ENCODE measurements at regions of chr10 and their contacts with region 1.

Region 1: GRCh38 chr10:125160856-125161706 is 718 bp upstream of the CTBP2 start:
- DNase-seq: peak; percentile 80 to 85
- ATAC-seq: peak; percentile 62 to 85 (median 73)
- H3K4me3 ChIP-seq: peak overlapping the region; percentile 46 to 98 (median 88)
- H3K27ac ChIP-seq: peak overlapping the region; percentile 63 to 99 (median 98)
- H3K4me1 ChIP-seq: peaks cover 7 to 35% (median 31%) of the 10 kb centered on the region in 9 donors
- H3K27me3 ChIP-seq: peaks cover 0 to 13% (median 0%) of the 10 kb centered on the region in 7 donors
- CTCF ChIP-seq: peak; percentile 25 to 71 (median 56)

Region 2: GRCh38 chr10:124992462-124993344 is 168.4 kb before region 1 on chr10:
- intact Hi-C with region 1: loop called in 2 of 10 experiments (anchors 5 to 10 kb)
- DNase-seq: peak; percentile 38 to 90
- ATAC-seq: peak; percentile 39 to 90 (median 76)
- H3K4me3 ChIP-seq: no peak overlapping the region
- H3K27ac ChIP-seq: peak overlapping the region in 1 of 10 donors; percentile 4
- H3K4me1 ChIP-seq: peaks cover 0 to 29% (median 5%) of the 10 kb centered on the region in 9 donors
- H3K27me3 ChIP-seq: no peaks in the 10 kb centered on the region
- CTCF ChIP-seq: peak; percentile 59 to 87 (median 79)

Region 3: DNA sequence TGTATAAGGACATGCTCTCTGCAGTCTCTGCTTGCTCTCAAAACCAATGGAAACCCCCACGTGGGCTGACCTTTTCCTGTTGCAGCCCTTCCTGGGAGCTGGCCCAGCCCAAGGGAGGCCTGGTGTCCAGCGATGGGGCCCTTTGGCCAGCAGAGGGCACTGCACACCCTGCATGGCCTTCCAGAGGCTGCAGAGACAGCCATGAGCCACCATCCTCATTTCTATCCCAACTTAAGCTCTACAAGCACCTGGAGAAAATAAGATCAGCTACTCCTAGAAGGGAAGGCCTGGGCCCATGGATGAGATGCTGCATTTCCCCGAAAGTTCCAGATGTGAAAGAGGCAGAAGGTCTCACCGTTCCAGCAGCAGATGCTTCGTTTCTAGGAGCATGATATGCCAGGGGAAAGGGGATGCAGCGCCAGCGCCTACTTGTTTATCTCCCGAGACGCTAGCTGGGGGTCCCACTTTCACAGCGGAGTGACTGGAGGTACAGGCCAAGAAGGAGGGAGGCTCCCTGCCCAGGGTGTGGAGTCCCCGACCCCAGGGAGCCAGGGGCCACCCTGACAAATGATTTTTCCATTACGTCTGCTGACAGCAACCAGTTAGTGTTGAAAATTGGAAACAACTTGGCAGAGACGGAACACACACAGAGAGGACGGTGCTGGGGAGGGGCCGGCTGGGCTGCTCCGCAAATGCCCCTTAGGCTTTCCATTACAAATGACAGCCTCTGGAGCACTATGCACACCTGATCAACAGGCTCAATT is 112.8 kb before region 1 on chr10:
- intact Hi-C with region 1: loop called in 2 of 10 experiments (anchors 5 to 10 kb)
- DNase-seq: peak; percentile 86 to 89
- ATAC-seq: peak; percentile 87 to 96 (median 94)
- H3K4me3 ChIP-seq: no peak overlapping the region
- H3K27ac ChIP-seq: peak overlapping the region in 7 of 10 donors; percentile 8 to 62 (median 42)
- H3K4me1 ChIP-seq: peaks cover 22 to 98% (median 64%) of the 10 kb centered on the region in 9 donors
- H3K27me3 ChIP-seq: no peaks in the 10 kb centered on the region
- CTCF ChIP-seq: peak; percentile 92 to 99 (median 98)

Region 4: DNA sequence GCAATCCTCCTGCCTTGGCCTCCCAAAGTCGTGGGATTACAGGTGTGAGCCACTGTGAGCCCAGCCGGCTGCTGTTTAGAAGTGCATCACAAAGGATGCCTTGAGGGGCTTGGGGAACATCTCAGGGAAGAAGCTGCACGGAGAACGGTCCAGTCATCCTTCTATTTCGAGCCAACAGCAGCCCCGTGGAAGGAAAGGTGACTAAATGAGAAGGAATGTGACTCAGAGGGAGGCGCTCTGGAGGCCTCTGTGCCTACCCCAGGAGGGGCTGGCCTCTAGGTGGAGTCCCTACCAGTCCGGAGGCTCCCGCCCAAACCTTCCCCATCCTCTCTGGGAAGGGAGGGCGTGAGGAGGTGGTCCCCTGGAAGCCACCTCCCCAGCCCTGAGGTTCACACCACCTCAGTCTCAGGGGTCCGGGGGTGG is 76.9 kb before region 1 on chr10:
- intact Hi-C with region 1: loop called in 1 of 10 experiments (anchors 5 kb)
- DNase-seq: peak; percentile 31 to 50
- ATAC-seq: peak; percentile 44 to 83 (median 73)
- H3K4me3 ChIP-seq: peak overlapping the region in 1 of 10 donors; percentile 17
- H3K27ac ChIP-seq: peak overlapping the region; percentile 54 to 89 (median 80)
- H3K4me1 ChIP-seq: peaks cover 17 to 76% (median 50%) of the 10 kb centered on the region in 9 donors
- H3K27me3 ChIP-seq: no peaks in the 10 kb centered on the region
- CTCF ChIP-seq: peak in 2 of 9 donors; percentile 15 to 22

Region 5: DNA sequence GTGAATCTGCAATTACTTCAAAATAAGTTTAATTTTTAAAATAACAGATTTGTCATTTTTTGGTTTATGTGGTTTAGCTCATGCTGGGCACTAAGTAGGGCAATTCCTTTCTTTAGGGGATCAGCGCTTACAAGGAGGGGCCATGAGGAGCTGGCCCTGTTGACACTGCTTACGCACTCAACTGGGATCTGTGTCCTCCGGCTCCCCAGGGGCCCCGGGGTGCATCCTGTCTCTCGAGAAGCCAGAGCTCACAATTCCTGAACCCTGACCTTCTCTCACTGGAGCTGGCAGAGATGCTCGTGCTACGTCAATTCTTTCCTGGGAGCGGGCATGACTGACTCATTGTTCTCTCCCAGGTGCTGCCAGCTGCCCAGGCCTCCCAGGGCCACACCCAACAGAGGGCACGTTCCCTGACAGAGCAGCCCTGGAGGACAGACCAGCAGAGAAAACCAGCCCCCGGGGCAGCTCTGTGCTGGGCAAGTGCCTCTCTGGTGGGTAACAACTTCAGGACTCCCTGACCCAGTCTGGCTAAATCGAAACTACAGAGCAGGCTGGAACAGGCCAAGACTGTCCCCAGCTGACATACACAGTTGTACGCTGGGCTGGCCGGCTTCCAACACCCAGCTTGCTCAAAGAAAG is 37.5 kb before region 1 on chr10:
- intact Hi-C with region 1: loop called in 3 of 10 experiments (anchors 2 to 5 kb)
- DNase-seq: peak; percentile 86 to 87
- ATAC-seq: peak; percentile 82 to 94 (median 86)
- H3K4me3 ChIP-seq: peak overlapping the region in 7 of 10 donors; percentile 5 to 38 (median 23)
- H3K27ac ChIP-seq: peak overlapping the region; percentile 48 to 91 (median 78)
- H3K4me1 ChIP-seq: peaks cover 21 to 97% (median 78%) of the 10 kb centered on the region in 9 donors
- H3K27me3 ChIP-seq: no peaks in the 10 kb centered on the region
- CTCF ChIP-seq: peak in 1 of 9 donors; percentile 12

Region 6: DNA sequence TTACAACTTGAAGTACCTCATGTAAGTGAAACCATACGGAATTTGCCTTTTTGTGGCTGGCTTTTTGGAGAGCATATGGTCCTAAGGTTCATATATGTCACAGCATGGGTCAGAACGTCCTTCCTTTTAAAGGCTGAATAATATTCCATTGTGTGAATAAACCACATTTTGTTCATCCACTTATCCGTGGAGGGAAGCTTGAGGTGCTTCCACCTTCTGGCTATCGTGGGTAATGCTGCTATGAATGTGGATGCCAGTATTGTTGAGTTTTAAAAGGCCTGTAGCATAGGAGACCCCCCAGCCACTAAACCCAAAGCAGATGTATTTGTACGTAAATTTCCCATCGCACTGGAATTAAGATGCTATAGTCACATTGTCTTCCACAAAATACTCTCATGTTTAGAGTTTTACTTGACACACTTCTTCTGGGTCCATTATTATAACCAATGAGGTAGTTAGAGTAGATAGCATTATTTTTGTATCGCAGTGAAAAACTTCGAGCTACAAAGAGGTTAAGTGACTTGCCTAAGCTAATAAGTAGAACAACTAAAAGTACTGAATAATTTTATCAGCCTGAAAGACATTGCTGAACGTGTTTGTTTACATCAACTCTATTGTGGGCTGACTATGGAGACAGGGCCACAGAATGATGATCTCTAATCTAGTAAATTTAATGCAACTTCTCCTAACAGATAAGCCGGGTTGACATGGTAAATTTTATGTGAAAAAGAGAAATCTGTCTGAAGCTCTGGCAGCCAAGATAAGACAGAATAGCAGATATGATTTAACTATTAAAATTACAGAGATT is 182.2 kb after region 1 on chr10:
- intact Hi-C with region 1: loop called in 5 of 10 experiments (anchors 5 kb)
- DNase-seq: no peak
- ATAC-seq: peak in 1 of 8 donors; percentile 25
- H3K4me3 ChIP-seq: no peak overlapping the region
- H3K27ac ChIP-seq: no peak overlapping the region
- H3K4me1 ChIP-seq: no peaks in the 10 kb centered on the region
- H3K27me3 ChIP-seq: peaks cover 0 to 8% (median 0%) of the 10 kb centered on the region in 7 donors
- CTCF ChIP-seq: peak; percentile 25 to 71 (median 61)

Region 7: GRCh38 chr10:125822878-125823662 is 662.0 kb after region 1 on chr10 and contains the starts of genes BCCIP and UROS:
- intact Hi-C with region 1: loop called in 1 of 10 experiments (anchors 5 kb)
- DNase-seq: peak; percentile 92
- ATAC-seq: peak; percentile 93 to 98 (median 96)
- H3K4me3 ChIP-seq: peak within 1 kb of the TSS; percentile 76 to 100 (median 93)
- H3K27ac ChIP-seq: peak within 1 kb of the TSS; percentile 80 to 99 (median 91)
- H3K4me1 ChIP-seq: peaks cover 15 to 47% (median 32%) of the 10 kb centered on the region in 9 donors
- H3K27me3 ChIP-seq: no peaks in the 10 kb centered on the region
- CTCF ChIP-seq: peak in 1 of 9 donors; percentile 9
- total RNA-seq, gene BCCIP: 35.6 to 53.1 (median 44.3) TPM
- total RNA-seq, gene UROS: 53.5 to 84.3 (median 70.8) TPM

Measured in heart right ventricle (tissue), 16 donors.